ENCODE measurements at regions of chr4 and their contacts with region 1.

Region 1: GRCh38 chr4:104064646-104065577 is 345.1 kb upstream of the TACR3 start:
- DNase-seq: peak; percentile 56
- ATAC-seq: peak; percentile 96
- H3K4me3 ChIP-seq: no peak overlapping the region
- H3K27ac ChIP-seq: no peak overlapping the region
- H3K4me1 ChIP-seq: no peaks in the 10 kb centered on the region
- H3K27me3 ChIP-seq: no peaks in the 10 kb centered on the region
- CTCF ChIP-seq: peak; percentile 63 to 81 (median 64)
- POLR2A ChIP-seq: no peak
- RAD21 ChIP-seq: peak; percentile 85

Region 2: DNA sequence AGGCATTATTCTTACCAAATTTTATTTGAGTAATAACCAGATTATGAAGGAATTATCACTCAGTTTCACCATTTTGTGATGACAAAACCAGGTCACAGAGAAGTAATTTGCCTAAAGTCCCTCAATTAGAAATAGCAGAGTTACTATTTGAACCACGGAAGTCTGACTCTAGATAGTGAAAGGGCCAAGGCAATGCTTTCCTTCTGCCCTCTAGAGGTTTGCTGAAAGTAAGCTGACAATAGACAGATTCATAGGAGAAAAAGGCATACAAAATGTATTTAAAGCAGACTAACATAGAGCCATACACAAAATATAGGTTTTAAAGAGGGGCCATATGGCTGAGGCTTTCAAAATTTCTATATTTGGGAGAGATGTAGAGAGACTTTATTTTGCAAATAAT is 386.7 kb after region 1 on chr4:
- CTCF ChIA-PET with region 1: no interaction called
- POLR2A ChIA-PET with region 1: no interaction called
- RAD21 ChIA-PET with region 1: no interaction called
- intact Hi-C with region 1: loop called (anchors 5 kb)
- DNase-seq: no peak
- ATAC-seq: peak; percentile 69
- H3K4me3 ChIP-seq: no peak overlapping the region
- H3K27ac ChIP-seq: no peak overlapping the region
- H3K4me1 ChIP-seq: no peaks in the 10 kb centered on the region
- H3K27me3 ChIP-seq: no peaks in the 10 kb centered on the region
- CTCF ChIP-seq: peak; percentile 24 to 55 (median 44); a peak in 4 of 6 replicates
- POLR2A ChIP-seq: no peak
- RAD21 ChIP-seq: peak; percentile 56

Region 3: DNA sequence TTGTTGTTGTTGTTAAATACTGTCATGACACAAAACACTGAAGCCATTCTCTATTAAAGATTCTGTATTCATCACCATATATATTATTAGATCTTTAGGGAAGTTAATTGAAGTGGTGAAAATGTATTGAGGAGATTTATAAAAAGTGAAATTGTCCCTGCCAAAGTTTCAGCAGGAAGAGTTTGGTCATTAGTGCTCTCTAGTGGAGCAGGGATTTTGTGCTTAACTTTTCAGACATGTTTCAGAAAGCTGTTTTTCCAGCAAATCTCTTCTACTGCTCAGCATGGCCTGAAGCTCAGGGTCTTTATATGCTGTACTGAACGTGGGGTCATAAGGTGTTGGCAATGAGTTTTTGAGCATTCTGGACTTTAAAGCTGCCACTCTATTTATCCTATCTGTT is 466.5 kb after region 1 on chr4:
- CTCF ChIA-PET with region 1: no interaction called
- POLR2A ChIA-PET with region 1: no interaction called
- RAD21 ChIA-PET with region 1: no interaction called
- intact Hi-C with region 1: loop called (anchors 5 kb)
- DNase-seq: no peak
- ATAC-seq: no peak
- H3K4me3 ChIP-seq: no peak overlapping the region
- H3K27ac ChIP-seq: no peak overlapping the region
- H3K4me1 ChIP-seq: no peaks in the 10 kb centered on the region
- H3K27me3 ChIP-seq: no peaks in the 10 kb centered on the region
- CTCF ChIP-seq: peak in 2 of 3 experiments; percentile 10 to 16; a peak in 1 of 6 replicates
- POLR2A ChIP-seq: no peak
- RAD21 ChIP-seq: peak; percentile 46

Measured in HCT116 (cell line).